Activated naive CD4-positive, alpha-beta T cell treated with anti-CD3 and anti-CD28 coated beads for 36 hours (primary cell): ENCODE measurements at regions of chr6 and their contacts with region 1.

Region 1: DNA sequence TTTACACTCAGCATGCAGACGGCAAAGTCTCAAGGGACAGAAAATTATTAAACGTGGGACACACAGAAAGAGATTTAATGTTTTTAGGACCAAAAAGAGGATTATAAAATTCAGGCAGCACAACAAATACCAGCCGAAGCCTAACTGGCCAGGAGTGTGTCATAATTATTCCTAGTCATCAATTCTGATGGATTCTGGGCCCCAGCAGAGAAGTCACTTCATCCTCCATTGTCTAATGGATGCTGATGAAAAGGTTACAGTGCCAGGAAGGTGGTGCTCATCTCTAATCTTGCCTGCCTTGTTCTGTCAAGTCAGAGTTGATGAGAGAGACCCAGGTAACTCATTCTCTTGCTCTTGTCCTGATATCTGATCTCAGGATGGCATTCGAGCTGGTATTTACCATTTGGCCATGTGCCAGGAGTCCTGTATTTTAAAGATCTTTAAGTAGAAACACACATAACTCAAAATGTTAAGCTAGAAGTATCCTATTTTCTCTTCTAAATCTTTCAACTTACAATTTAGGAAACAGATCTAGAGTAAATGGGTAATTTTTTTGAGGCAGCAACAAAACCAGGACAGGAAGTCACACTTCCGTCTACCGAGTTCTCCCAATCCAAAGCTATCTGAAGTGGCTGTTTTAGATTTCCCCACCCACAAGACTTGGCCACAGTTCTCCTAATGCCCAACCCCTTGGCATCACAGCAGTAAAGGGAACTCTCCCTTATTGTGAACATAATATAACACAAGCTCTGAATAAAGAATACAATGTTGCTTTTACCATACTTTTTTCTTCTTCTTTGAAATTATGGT is 50.0 kb downstream of the ADAT2 start:
- DNase-seq: peak; percentile 40
- H3K4me3 Mint-ChIP-seq: no peak overlapping the region
- H3K27ac Mint-ChIP-seq: peak overlapping the region; percentile 29
- H3K4me1 Mint-ChIP-seq: peaks cover 18% of the 10 kb centered on the region
- H3K27me3 Mint-ChIP-seq: no peaks in the 10 kb centered on the region

Region 2: GRCh38 chr6:142387997-142388815 is 1012.3 kb before region 1 on chr6:
- CTCF ChIA-PET with region 1: no interaction called
- intact Hi-C with region 1: no loop called
- DNase-seq: no peak
- H3K4me3 Mint-ChIP-seq: no peak overlapping the region
- H3K27ac Mint-ChIP-seq: no peak overlapping the region
- H3K4me1 Mint-ChIP-seq: no peaks in the 10 kb centered on the region
- H3K27me3 Mint-ChIP-seq: no peaks in the 10 kb centered on the region

Region 3: DNA sequence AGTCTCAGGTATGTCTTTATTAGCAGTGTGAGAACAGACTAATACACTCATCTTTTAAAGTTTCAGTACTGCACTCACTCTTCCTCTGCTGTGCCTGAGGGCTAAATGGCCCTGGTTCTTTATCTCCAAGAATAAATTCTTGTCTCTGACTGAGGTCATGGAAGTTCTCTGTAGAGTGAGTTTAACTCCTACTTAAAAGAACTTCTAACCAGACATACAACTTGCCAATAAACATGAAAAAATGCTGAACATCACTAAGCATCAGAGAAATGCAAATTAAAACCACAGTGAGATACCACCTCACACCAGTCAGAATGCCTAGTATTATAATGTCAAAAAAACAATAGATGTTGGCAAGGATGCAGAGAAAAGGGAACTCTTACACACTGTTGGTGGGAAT is 23.6 kb before region 1 on chr6:
- CTCF ChIA-PET with region 1: interaction called, 9 read pairs
- intact Hi-C with region 1: loop called (anchors 1 kb)
- DNase-seq: no peak
- H3K4me3 Mint-ChIP-seq: no peak overlapping the region
- H3K27ac Mint-ChIP-seq: no peak overlapping the region
- H3K4me1 Mint-ChIP-seq: no peaks in the 10 kb centered on the region
- H3K27me3 Mint-ChIP-seq: peaks cover 14% of the 10 kb centered on the region